Naive thymus-derived CD4-positive, alpha-beta T cell (primary cell): ENCODE measurements at regions of chr3 and their contacts with region 1.

Region 1: DNA sequence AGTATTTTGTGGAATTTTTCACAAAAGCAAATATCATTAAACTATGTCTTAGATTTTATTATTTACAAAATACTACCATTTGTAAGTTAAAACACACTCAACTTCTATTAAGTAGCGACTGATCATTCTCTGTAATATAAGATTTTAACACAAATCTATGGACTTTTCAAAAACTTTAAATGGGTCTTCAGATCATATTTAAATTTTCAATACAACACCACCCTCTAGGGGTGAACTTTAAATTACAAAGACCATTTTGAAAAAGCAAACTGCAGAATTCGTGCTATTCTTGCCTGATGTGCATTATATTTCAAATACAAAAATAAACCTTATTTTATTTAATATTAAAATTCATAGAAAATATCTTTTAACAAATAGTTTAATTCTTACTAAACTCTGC is 8.2 kb upstream of the VGLL4 start:
- DNase-seq: peak in 7 of 9 donors; percentile 23 to 55 (median 48)
- ATAC-seq: peak; percentile 41
- H3K4me3 ChIP-seq: no peak overlapping the region
- H3K4me3 Mint-ChIP-seq: no peak overlapping the region
- H3K27ac ChIP-seq: no peak overlapping the region
- H3K27ac Mint-ChIP-seq: no peak overlapping the region
- H3K4me1 ChIP-seq: no peaks in the 10 kb centered on the region
- H3K4me1 Mint-ChIP-seq: peaks cover 0 to 13% (median 4%) of the 10 kb centered on the region in 7 donors
- H3K27me3 ChIP-seq: no peaks in the 10 kb centered on the region
- H3K27me3 Mint-ChIP-seq: peaks cover 0 to 28% (median 0%) of the 10 kb centered on the region in 5 donors

Region 2: DNA sequence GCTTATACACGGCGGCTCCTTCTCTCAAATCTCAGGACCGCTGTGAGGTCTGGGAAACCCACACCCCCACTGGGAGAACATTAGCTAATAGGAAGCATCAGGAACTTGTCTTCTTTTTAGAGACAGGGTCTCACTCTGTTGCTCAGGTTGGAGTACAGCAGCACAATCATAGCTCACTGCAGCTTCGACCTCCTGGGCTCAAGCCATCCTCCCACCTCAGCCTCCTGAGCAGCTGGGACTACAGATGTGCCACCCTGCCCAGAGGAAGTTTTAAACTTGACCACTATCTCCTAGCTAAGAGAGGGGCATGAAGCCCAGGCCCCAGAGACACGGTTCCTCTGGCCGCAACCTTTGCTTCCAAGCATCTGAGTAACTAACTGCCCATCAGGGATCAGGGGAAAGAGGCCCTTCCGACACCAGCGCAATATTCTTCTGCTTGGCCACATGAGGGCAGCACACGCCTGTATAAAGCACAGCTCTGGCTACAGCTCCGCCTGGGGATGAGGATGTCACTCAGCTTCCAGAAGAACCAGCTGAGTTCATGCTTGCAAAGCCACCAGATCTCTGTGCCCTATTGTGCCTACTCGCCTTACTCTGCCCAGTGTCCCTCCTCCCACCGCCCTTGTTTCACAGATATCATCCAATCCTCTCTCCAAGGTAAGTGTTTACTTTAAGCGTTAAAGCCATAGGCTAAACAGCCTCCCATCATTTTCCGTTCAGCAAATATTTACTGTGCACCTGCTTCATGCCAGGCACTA is 893.4 kb before region 1 on chr3:
- CTCF ChIA-PET with region 1: no interaction called
- POLR2A ChIA-PET with region 1: no interaction called
- intact Hi-C with region 1: loop called in 1 of 2 experiments (anchors 5 kb)
- DNase-seq: peak in 8 of 9 donors; percentile 8 to 38 (median 21)
- ATAC-seq: peak; percentile 70
- H3K4me3 ChIP-seq: no peak overlapping the region
- H3K4me3 Mint-ChIP-seq: no peak overlapping the region
- H3K27ac ChIP-seq: no peak overlapping the region
- H3K27ac Mint-ChIP-seq: no peak overlapping the region
- H3K4me1 ChIP-seq: no peaks in the 10 kb centered on the region
- H3K4me1 Mint-ChIP-seq: no peaks in the 10 kb centered on the region
- H3K27me3 ChIP-seq: no peaks in the 10 kb centered on the region
- H3K27me3 Mint-ChIP-seq: peaks cover 23 to 54% (median 39%) of the 10 kb centered on the region in 5 donors

Region 3: DNA sequence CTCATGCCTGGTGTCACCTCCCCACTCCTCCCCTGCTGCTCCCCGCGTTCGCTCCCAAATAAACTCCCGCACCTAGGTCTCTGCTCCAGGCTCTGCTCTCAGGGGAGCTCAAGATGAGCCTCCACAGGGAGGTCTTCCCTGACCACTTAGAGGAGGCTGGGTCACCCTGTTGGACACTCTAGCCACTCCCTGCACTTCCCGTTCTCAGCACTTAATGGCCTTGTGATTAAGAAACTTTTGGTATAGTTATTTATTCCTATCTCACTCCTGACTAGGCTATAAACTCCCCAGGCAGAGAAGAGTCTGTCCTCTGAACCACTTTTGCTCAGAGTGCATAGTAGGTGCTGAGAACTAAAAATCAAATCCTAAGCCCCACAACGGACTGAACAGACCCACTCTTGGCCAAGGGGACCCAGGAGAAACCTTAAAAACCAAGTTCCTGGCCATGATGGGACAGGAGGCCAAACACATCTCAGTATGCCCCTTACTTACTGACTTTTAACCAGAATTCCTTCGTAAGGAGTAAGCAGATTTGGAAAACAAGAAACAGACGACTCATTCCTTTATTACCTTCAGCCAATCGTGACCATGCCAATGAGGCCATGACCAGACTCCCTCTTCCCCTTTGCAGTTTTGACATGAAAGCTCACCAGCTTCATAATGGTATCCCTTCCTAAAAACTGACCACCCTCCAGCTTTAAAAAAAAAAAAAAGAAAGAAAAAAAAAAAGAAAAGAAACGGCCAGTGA is 566.6 kb before region 1 on chr3:
- CTCF ChIA-PET with region 1: no interaction called
- POLR2A ChIA-PET with region 1: no interaction called
- intact Hi-C with region 1: no loop called
- DNase-seq: no peak
- ATAC-seq: no peak
- H3K4me3 ChIP-seq: no peak overlapping the region
- H3K4me3 Mint-ChIP-seq: no peak overlapping the region
- H3K27ac ChIP-seq: no peak overlapping the region
- H3K27ac Mint-ChIP-seq: no peak overlapping the region
- H3K4me1 ChIP-seq: no peaks in the 10 kb centered on the region
- H3K4me1 Mint-ChIP-seq: peaks cover 0 to 1% (median 0%) of the 10 kb centered on the region in 7 donors
- H3K27me3 ChIP-seq: no peaks in the 10 kb centered on the region
- H3K27me3 Mint-ChIP-seq: peaks cover 0 to 2% (median 0%) of the 10 kb centered on the region in 5 donors

Region 4: DNA sequence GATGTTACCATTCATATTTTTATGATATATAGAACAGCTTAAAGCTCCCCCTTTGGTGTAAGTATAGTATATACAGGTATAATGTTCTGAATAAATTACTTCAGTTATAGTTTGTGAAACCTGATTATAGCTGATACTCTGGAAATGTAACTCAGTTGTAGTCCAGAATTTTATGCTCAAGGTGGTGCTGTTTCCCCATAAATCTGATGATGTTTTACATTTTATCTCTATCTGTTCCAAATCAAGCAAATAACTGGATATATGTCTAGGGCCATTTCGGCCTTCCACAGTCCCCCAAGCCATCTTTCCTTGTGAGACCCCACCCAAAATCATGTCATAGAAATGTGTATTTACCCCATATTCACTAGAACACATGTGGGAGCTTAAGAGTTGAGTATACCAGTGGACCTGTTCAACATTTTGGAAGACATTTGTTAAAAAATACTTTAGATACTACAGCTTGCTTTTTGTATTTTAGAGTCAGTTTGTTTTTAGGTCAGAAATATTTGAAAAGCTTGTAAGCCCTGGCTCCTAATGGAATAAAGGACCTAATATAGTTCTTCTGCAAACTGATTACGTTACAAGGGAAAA is 272.6 kb before region 1 on chr3:
- CTCF ChIA-PET with region 1: interaction called, 35 read pairs
- POLR2A ChIA-PET with region 1: no interaction called
- intact Hi-C with region 1: loop called (anchors 1 kb)
- DNase-seq: peak in 7 of 9 donors; percentile 8 to 47 (median 41)
- ATAC-seq: peak; percentile 40
- H3K4me3 ChIP-seq: no peak overlapping the region
- H3K4me3 Mint-ChIP-seq: no peak overlapping the region
- H3K27ac ChIP-seq: no peak overlapping the region
- H3K27ac Mint-ChIP-seq: no peak overlapping the region
- H3K4me1 ChIP-seq: no peaks in the 10 kb centered on the region
- H3K4me1 Mint-ChIP-seq: no peaks in the 10 kb centered on the region
- H3K27me3 ChIP-seq: no peaks in the 10 kb centered on the region
- H3K27me3 Mint-ChIP-seq: no peaks in the 10 kb centered on the region

Region 5: DNA sequence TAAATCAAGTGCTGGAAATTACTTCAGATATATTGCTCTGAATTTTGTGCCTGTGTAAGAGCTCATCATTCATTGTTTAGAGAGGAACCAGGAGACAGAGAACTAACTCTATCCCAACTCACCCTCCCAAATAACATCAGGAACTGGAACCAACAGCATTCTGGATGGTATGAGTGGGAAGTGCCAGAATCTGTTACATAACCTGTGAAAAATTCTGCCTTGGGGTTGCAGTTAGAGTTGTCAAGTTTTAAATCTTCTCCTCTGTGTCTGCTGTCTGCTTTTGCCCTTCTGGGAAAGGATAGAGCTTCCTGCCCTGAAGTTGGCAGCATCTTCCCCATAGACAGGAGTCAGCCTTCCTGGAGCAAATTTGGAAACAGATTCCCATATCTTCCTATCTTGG is 465.6 kb after region 1 on chr3:
- CTCF ChIA-PET with region 1: no interaction called
- POLR2A ChIA-PET with region 1: no interaction called
- intact Hi-C with region 1: no loop called
- DNase-seq: no peak
- ATAC-seq: no peak
- H3K4me3 ChIP-seq: no peak overlapping the region
- H3K4me3 Mint-ChIP-seq: no peak overlapping the region
- H3K27ac ChIP-seq: no peak overlapping the region
- H3K27ac Mint-ChIP-seq: no peak overlapping the region
- H3K4me1 ChIP-seq: no peaks in the 10 kb centered on the region
- H3K4me1 Mint-ChIP-seq: peaks cover 0 to 5% (median 0%) of the 10 kb centered on the region in 7 donors
- H3K27me3 ChIP-seq: no peaks in the 10 kb centered on the region
- H3K27me3 Mint-ChIP-seq: peaks cover 20 to 52% (median 35%) of the 10 kb centered on the region in 5 donors